Activated CD4-positive, alpha-beta memory T cell treated with anti-CD3 and anti-CD28 coated beads for 36 hours (primary cell): ENCODE measurements at regions of chr14 and their contacts with region 1.

Region 1: GRCh38 chr14:21734457-21735074 is 60.9 kb upstream of the OR4E1 start:
- DNase-seq: peak; percentile 37
- H3K4me3 Mint-ChIP-seq: peak overlapping the region; percentile 36
- H3K27ac Mint-ChIP-seq: peak overlapping the region; percentile 31
- H3K4me1 Mint-ChIP-seq: peaks cover 11% of the 10 kb centered on the region
- H3K27me3 Mint-ChIP-seq: peaks cover 41% of the 10 kb centered on the region

Region 2: DNA sequence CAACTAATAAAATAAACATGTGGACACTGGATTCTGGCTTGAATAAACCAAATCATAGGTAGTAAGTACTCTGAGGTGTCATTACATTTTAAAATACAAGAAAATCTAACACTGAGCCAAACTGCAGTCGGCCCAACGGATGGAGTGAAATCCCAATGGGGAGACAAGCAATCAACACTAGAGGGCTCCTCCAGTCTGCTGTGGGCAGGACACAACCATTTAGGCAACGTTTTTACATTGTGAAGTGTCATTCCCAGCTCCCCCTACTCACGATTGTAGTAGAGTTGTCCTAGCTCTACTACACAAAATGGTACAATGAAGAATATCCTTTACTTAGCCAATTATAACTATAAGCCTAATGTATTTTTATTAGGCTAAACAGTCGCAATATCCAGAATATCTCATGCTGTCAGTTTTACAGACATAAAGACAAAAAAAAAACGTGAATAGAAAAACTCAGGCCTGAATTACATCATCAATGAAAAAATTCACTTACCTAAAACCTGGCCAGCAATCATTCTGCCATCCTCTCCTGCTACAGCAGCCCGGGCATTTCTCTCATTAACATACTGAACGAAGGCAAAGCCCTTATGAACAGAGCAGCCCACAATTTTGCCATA is 501.0 kb before region 1 on chr14:
- CTCF ChIA-PET with region 1: no interaction called
- POLR2A ChIA-PET with region 1: no interaction called
- intact Hi-C with region 1: no loop called
- DNase-seq: peak; percentile 33
- H3K4me3 Mint-ChIP-seq: peak overlapping the region; percentile 46
- H3K27ac Mint-ChIP-seq: peak overlapping the region; percentile 79
- H3K4me1 Mint-ChIP-seq: peaks cover 89% of the 10 kb centered on the region
- H3K27me3 Mint-ChIP-seq: no peaks in the 10 kb centered on the region

Region 3: GRCh38 chr14:21723431-21724045 is 11.0 kb before region 1 on chr14:
- CTCF ChIA-PET with region 1: interaction called, 18 read pairs
- POLR2A ChIA-PET with region 1: no interaction called
- intact Hi-C with region 1: no loop called
- DNase-seq: peak; percentile 63
- H3K4me3 Mint-ChIP-seq: peak overlapping the region; percentile 69
- H3K27ac Mint-ChIP-seq: peak overlapping the region; percentile 80
- H3K4me1 Mint-ChIP-seq: peaks cover 3% of the 10 kb centered on the region
- H3K27me3 Mint-ChIP-seq: peaks cover 16% of the 10 kb centered on the region